MCF 10A (cell line): ENCODE measurements at regions of chr7 and their contacts with region 1.

Region 1: GRCh38 chr7:95545078-95545498 is 51.2 kb downstream of the PDK4 start:
- DNase-seq: peak; percentile 77
- H3K4me3 Mint-ChIP-seq: peak overlapping the region; percentile 59
- H3K27ac Mint-ChIP-seq: peak overlapping the region; percentile 76
- H3K4me1 Mint-ChIP-seq: peaks cover 33% of the 10 kb centered on the region
- H3K27me3 Mint-ChIP-seq: peaks cover 19% of the 10 kb centered on the region
- CTCF ChIP-seq: peak; percentile 61

Region 2: GRCh38 chr7:95511716-95512260 is 33.3 kb before region 1 on chr7:
- CTCF ChIA-PET with region 1: interaction called, 42 read pairs
- POLR2A ChIA-PET with region 1: no interaction called
- intact Hi-C with region 1: no loop called
- DNase-seq: peak; percentile 78
- H3K4me3 Mint-ChIP-seq: no peak overlapping the region
- H3K27ac Mint-ChIP-seq: no peak overlapping the region
- H3K4me1 Mint-ChIP-seq: no peaks in the 10 kb centered on the region
- H3K27me3 Mint-ChIP-seq: peaks cover 29% of the 10 kb centered on the region
- CTCF ChIP-seq: peak; percentile 59

Region 3: GRCh38 chr7:95534796-95535195 is 10.3 kb before region 1 on chr7:
- CTCF ChIA-PET with region 1: interaction called, 98 read pairs
- POLR2A ChIA-PET with region 1: interaction called, 4 read pairs
- intact Hi-C with region 1: no loop called
- DNase-seq: no peak
- H3K4me3 Mint-ChIP-seq: no peak overlapping the region
- H3K27ac Mint-ChIP-seq: no peak overlapping the region
- H3K4me1 Mint-ChIP-seq: no peaks in the 10 kb centered on the region
- H3K27me3 Mint-ChIP-seq: peaks cover 23% of the 10 kb centered on the region
- CTCF ChIP-seq: no peak

Region 4: DNA sequence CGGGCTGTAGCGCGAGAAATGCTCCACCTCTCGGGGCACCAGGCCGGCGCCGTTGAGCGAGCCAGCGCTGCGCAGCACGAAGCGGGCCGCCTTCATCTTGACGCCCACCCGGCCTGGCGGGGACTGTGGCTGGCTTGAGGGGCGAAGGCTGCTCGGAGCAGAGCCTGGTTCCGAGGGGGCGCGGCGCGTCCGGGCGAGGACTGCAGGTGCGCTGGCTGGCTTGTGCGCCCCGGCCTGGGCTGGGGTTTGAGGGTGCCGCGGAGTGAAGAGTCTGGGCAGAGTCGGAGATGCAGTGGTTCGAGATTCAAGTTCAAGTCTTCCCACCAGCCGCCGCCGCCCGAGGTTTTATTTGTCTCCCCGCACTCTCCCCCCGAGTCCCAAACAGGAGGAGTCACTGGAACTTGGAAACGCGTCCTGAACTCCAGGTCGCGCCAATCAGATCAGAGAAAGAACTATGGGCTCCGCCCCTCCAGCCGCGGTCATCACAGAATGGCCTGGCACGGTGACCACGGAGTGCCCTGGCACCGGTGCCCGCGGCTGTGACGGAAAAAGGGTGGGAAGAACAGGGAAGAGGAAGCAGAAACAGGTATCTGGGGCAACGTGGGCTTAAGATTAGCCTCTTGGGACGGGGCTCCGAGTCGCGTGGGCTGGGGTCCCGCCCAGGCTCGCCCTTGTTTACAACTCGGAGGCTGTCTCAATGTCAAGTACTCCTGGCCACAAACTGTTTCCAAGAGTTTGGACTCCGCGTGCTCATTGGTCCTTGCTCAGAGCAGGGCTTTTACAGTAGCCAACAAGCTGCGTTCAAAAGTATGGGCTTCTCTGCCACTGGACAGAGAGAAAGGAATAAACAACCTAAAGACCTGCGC is 51.3 kb after region 1 on chr7 and contains the start of gene PDK4:
- CTCF ChIA-PET with region 1: interaction called, 10 read pairs
- POLR2A ChIA-PET with region 1: interaction called, 28 read pairs
- intact Hi-C with region 1: loop called (anchors 2 kb)
- DNase-seq: peak; percentile 89
- H3K4me3 Mint-ChIP-seq: peak within 1 kb of the TSS; percentile 72
- H3K27ac Mint-ChIP-seq: peak within 1 kb of the TSS; percentile 84
- H3K4me1 Mint-ChIP-seq: peaks cover 13% of the 10 kb centered on the region
- H3K27me3 Mint-ChIP-seq: no peaks in the 10 kb centered on the region
- CTCF ChIP-seq: no peak
- total RNA-seq, gene PDK4: 1.2 and 1.3 TPM in 2 replicates

Region 5: DNA sequence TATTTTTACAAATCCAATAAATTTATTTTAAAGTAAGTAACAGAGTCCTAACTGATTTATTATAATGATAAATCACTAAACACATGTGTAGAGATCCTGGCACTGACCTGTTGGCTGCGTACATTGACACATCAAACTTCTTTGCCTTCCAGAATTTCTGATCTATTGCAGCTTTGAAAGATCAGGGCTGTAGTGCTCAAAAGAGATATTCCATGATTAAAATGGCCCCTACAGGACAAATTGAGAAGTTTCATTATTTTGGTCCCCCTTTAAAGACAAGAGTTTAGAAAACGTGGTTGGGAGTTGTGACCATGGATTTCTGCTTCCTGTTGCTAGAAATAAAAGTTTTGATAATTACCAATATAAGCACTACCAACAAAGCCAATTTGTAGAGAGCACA is 138.9 kb after region 1 on chr7:
- CTCF ChIA-PET with region 1: interaction called, 1,114 read pairs
- POLR2A ChIA-PET with region 1: interaction called, 59 read pairs
- intact Hi-C with region 1: loop called (anchors 1 kb)
- DNase-seq: peak; percentile 60
- H3K4me3 Mint-ChIP-seq: no peak overlapping the region
- H3K27ac Mint-ChIP-seq: no peak overlapping the region
- H3K4me1 Mint-ChIP-seq: peaks cover 4% of the 10 kb centered on the region
- H3K27me3 Mint-ChIP-seq: no peaks in the 10 kb centered on the region
- CTCF ChIP-seq: peak; percentile 19